PC-3 (cell line): ENCODE measurements at regions of chr2 and their contacts with region 1.

Region 1: DNA sequence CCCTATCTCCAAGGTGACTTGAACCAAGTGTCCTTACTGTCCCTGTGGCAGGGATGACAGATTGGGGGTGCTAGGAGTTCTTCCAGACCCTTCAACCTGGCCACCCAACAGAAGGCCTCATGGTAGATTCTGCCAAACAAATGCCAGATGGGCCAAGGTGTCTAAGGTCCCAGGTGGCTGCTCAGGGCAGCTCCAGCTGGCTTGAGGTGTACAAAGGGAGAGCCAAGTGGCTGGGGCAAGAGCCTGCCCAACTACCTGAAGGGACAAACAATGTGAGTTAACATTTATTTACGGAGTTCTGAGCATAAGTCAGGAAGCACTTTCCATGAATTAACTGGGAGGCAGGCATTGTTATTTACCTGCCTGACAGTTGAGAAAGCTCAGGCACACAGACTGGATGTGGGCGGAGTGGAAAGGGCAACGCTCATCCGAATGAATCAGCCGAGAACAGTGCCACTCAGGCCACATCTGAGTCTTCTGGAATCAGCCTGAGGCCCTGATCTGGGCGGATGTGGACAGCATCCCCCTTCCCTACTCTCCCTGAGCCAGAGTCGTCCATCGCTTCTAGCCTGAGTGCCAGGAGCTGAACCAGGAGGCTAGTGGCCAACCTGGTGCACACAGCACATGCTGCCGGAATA is 4.4 kb upstream of the KCNIP3 start:
- DNase-seq: peak; percentile 95
- ATAC-seq: peak; percentile 92
- H3K4me3 ChIP-seq: no peak overlapping the region
- H3K27ac ChIP-seq: peak overlapping the region; percentile 46
- H3K4me1 ChIP-seq: peaks cover 32% of the 10 kb centered on the region
- H3K27me3 ChIP-seq: no peaks in the 10 kb centered on the region
- CTCF ChIP-seq: no peak

Region 2: GRCh38 chr2:95278051-95278471 is 14.7 kb before region 1 on chr2:
- CTCF ChIA-PET with region 1: interaction called, 5 read pairs
- POLR2A ChIA-PET with region 1: no interaction called
- intact Hi-C with region 1: loop called (anchors 2 kb)
- DNase-seq: peak; percentile 94
- ATAC-seq: peak; percentile 82
- H3K4me3 ChIP-seq: peak overlapping the region; percentile 36
- H3K27ac ChIP-seq: peak overlapping the region; percentile 81
- H3K4me1 ChIP-seq: peaks cover 53% of the 10 kb centered on the region
- H3K27me3 ChIP-seq: no peaks in the 10 kb centered on the region
- CTCF ChIP-seq: no peak